HEK293T (cell line): ENCODE measurements at regions of chr19 and their contacts with region 1.

Region 1: DNA sequence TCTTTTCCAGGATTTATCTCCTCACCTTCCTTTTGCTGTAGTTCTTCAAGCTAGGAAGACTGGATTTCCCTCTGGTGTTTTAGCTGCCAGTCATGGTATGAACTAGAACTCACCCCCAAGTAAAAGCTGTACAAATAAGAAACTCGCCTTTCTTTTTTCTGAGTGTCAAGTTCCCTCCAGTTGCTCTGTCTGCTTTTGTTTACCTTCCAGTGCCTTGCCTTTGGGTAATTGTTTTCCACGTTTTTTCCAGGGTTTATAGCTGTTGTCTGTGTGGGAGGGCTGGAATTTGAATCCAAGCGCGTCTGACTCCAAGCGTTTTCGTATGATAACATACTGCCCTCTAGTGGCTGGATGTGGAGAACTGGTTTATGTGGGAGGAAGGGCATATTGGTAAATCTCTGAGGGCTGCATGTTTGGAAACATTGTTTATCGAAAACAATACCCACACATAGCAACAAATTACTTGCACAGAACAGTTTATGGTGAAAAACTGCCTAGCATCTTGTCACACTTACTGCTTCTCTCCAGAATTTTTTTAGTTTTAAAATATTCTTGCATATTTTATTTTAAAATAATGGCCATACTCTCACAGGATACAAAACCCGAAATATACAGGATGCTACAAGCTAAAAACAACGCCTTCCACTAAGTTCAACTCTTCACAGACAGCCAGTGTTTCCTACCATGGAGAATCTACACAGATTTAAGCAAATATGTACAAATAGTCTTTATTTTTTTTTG is 19.2 kb downstream of the RCN3 start:
- DNase-seq: peak; percentile 79

Region 2: GRCh38 chr19:49502866-49503581 is 44.0 kb before region 1 on chr19:
- CTCF ChIA-PET with region 1: interaction called, 56 read pairs
- POLR2A ChIA-PET with region 1: interaction called, 10 read pairs
- DNase-seq: peak; percentile 52

Region 3: GRCh38 chr19:49727217-49728030 is 180.4 kb after region 1 on chr19:
- CTCF ChIA-PET with region 1: no interaction called
- POLR2A ChIA-PET with region 1: no interaction called
- DNase-seq: no peak